ENCODE measurements at regions of chr6 and their contacts with region 1.

Region 1: DNA sequence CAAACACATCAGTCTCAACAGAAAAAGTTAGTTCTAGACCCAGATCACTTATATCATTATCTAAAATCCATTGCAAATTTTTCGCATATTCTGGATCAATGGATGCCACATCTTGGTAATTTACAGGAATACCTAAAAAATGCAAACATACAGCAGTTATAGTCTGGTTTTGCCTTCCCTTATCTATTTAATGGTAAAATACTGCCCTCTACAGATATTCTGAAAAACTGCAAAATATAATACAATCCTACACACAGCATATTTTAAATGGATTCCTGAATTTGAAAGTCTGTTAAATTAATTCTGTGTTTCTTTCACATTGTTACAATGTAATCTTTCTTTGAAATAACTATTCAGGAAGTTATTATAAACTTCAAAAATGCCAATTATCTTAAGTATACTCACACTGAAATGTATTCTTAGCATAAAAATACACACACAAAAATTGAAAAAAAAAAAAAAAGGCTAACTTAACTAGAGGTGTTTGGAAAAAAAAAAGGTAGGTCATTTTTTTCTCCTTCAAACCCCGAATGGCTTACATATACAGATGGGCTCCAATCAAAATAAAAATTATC is 88.4 kb downstream of the HACE1 start:
- DNase-seq: peak; percentile 53
- H3K4me3 ChIP-seq: no peak overlapping the region
- H3K27ac ChIP-seq: no peak overlapping the region
- H3K4me1 ChIP-seq: no peaks in the 10 kb centered on the region
- CTCF ChIP-seq: peak; percentile 96

Region 2: DNA sequence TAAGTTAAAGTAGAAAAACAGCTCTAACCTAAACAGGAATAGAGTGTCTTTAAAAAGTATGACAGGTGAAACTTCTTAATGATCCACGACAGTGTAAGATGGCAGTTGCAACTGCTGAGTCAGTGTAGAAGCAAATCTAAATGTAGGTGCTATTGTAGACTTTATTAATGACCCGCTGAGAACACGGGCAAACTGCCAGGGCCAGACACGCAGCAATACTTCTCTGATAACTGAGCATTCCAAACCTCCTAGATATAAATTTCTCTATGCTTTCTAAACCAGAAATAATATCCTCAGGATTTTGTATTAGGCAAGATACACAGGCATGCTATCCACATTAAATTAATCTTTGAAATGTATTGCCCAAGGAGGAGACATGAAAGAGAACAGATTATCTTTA is 988.0 kb before region 1 on chr6:
- CTCF ChIA-PET with region 1: no interaction called
- POLR2A ChIA-PET with region 1: no interaction called
- intact Hi-C with region 1: no loop called
- DNase-seq: no peak
- H3K4me3 ChIP-seq: no peak overlapping the region
- H3K27ac ChIP-seq: no peak overlapping the region
- H3K4me1 ChIP-seq: no peaks in the 10 kb centered on the region
- CTCF ChIP-seq: no peak

Region 3: GRCh38 chr6:104525677-104526312 is 245.6 kb before region 1 on chr6:
- CTCF ChIA-PET with region 1: no interaction called
- POLR2A ChIA-PET with region 1: interaction called, 4 read pairs
- intact Hi-C with region 1: loop called (anchors 1 kb)
- DNase-seq: peak; percentile 84
- H3K4me3 ChIP-seq: no peak overlapping the region
- H3K27ac ChIP-seq: no peak overlapping the region
- H3K4me1 ChIP-seq: no peaks in the 10 kb centered on the region
- CTCF ChIP-seq: peak; percentile 99

Region 4: DNA sequence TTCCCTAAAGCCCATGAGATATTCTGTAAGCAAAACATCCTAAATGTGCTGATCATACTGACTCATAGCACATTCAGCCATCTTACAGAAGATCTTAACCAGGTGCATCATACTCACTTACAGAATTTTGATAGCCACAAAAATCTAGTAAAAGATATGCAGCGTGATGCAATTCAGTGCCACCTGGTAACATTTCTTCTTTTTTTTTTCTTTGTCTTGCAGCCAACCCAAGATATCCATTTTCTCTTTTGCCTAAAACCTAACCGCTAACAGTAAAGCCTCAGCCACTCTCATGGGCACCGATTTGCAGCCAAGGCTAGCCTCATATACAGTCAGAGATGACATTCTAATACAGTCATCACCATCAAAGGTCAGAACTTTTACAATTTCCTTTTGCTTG is 204.9 kb before region 1 on chr6:
- CTCF ChIA-PET with region 1: no interaction called
- POLR2A ChIA-PET with region 1: no interaction called
- intact Hi-C with region 1: no loop called
- DNase-seq: no peak
- H3K4me3 ChIP-seq: no peak overlapping the region
- H3K27ac ChIP-seq: no peak overlapping the region
- H3K4me1 ChIP-seq: no peaks in the 10 kb centered on the region
- CTCF ChIP-seq: no peak

Region 5: DNA sequence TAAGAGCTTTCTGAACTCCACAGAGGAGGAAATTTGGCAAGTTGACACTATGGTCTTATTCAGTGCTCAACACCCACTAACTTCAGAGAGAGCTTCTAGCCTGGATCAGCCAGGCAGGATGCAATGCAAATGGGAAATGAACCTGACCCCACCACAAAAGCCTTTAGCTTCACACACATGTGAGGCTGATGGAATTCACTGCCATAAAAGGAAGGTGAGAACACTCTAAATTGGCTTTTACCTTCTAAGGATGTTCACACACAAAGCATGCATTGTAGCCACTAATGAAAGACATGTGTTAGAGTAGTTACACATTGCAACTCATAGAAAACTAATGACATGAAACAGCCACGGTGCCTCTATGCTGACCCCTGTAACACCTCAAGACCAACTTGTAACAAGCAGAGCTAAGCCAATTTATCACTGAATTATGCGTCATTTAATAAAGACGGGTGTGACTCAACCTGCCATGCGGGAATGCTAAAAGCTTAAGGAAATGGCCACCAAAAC is 173.7 kb before region 1 on chr6:
- CTCF ChIA-PET with region 1: no interaction called
- POLR2A ChIA-PET with region 1: interaction called, 10 read pairs
- intact Hi-C with region 1: no loop called
- DNase-seq: no peak
- H3K4me3 ChIP-seq: no peak overlapping the region
- H3K27ac ChIP-seq: no peak overlapping the region
- H3K4me1 ChIP-seq: no peaks in the 10 kb centered on the region
- CTCF ChIP-seq: no peak

Region 6: DNA sequence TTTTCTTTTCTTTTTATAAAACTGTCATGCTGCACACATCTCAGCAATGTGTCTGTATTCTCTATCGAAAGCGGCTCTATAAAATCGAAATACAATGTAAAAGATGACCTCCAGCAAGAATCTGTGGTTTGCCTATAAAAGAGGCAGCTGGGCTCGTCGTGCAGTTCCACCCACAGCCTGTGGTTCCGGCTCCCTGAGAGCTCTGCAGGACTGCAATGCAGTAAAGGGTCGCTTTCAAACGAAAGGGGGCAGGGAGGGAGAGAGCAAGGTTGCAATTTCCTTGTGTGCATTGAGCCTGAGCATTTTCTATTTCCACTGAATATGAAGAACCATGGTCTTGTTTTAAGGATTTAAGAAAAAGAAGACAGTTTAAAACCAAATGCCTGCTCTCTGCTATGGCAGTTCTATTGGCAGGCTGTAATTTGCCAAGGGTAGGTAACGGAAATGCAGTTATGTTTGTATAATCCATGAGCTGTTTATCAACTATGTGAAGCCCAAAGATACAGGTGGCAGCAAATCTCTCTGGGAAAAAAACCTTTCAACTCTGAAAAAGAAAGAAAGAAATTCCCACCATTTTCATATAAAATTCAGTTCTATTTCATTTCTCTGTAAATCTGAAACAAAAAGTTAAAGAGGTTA is 148.2 kb before region 1 on chr6:
- CTCF ChIA-PET with region 1: no interaction called
- POLR2A ChIA-PET with region 1: no interaction called
- intact Hi-C with region 1: loop called (anchors 5 kb)
- DNase-seq: peak; percentile 75
- H3K4me3 ChIP-seq: peak overlapping the region; percentile 29
- H3K27ac ChIP-seq: no peak overlapping the region
- H3K4me1 ChIP-seq: peaks cover 35% of the 10 kb centered on the region
- CTCF ChIP-seq: peak; percentile 55

Region 7: DNA sequence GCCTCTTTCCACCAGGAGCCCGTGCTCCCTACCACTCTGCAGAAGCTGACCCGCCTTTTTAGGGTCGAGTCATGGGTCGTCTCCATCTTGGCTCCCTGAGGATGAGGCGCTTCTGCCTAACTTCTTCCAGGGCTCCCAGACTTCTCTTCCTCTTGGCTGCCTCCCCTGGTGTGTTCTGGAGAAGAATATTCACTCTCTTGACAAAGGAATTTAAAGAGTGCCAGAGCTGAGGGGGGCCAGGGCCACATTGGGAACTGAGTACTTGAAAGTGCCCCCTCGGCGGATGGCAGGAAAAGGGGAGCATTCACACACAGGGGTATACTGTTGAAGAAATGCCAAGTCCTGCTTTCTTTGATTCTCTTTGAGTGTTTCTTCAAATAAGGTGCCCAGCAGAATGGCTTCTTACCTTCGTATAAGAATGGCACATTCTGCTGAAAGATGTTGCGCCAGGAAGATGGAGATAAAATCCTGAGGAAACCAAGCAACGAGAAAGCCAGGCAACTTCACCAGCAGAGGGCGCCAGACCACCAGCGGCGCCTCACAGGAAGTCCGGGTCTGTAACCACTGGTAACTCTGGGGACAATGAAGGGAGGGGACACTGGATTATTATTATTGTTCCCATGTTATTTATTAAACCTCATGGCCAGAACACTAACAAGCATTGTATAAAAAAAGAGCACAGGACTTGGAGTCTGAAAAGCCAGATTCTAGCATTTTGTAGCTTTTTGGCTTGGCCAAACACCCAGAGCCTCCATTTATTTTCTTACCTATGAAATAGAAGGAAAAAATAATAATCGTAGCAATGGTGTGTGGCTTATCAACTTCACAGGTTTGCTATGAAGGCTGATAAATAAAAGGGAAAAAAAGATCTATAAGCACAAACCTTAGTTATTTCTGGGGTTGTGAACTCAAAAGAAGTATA is 88.4 kb before region 1 on chr6:
- CTCF ChIA-PET with region 1: no interaction called
- POLR2A ChIA-PET with region 1: no interaction called
- intact Hi-C with region 1: loop called (anchors 1 kb)
- DNase-seq: peak; percentile 63
- H3K4me3 ChIP-seq: no peak overlapping the region
- H3K27ac ChIP-seq: no peak overlapping the region
- H3K4me1 ChIP-seq: peaks cover 21% of the 10 kb centered on the region
- CTCF ChIP-seq: peak; percentile 99

Region 8: DNA sequence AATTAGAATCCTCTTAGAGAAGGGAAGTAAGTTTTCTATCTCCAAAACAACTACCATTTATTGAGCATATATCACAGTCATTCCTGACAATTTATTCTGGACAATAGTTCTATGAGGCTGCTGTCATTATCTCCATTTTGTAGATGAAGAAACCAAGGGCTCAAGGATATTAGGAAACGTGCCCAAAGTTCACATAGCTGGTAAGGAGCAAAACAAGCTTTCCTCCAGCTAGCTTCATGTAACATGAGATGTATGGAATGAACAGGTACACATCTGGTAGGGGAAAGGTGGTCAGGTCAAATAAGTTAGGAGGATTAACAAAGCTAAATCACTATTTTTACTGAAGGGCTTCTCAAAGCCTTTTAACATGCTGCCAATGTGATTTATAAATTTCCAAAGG is 12.0 kb after region 1 on chr6:
- CTCF ChIA-PET with region 1: no interaction called
- POLR2A ChIA-PET with region 1: interaction called, 10 read pairs
- intact Hi-C with region 1: no loop called
- DNase-seq: no peak
- H3K4me3 ChIP-seq: no peak overlapping the region
- H3K27ac ChIP-seq: no peak overlapping the region
- H3K4me1 ChIP-seq: no peaks in the 10 kb centered on the region
- CTCF ChIP-seq: no peak